ENCODE measurements at regions of chr12 and their contacts with region 1.

Region 1: DNA sequence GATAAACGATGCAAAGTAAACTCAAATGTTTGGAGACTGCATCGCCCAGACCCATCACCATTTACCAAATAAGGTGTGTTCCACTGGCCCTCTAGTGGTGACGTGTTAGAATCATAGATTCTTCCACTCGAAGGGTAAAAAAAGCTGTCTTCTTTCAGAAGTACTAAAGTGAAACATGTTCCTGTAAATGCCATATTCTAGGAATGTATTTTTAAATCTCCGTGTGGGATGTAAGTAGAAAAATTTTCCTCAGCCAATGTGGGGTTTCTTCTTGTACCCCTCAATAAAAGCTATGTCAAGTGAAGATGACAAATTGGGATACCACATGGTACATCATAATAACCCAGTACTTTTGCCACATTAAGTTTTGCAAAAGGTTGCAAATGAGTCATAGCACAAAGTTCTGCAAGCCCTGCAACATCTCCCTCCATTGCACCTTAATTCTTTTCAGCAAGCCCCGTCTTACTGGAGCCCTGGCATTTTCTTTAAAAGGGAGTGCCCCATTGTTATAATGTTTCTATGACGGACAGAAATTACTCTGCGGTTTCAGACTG is 100.8 kb downstream of the CCER1 start:
- DNase-seq: peak in 3 of 10 donors; percentile 9 to 58 (median 31)
- H3K4me3 ChIP-seq: peak overlapping the region in 3 of 59 donors; percentile 2 to 7 (median 5)
- H3K27ac ChIP-seq: peak overlapping the region in 31 of 59 donors; percentile 2 to 80 (median 64)
- H3K27me3 ChIP-seq: no peaks in the 10 kb centered on the region
- CTCF ChIP-seq: peak; percentile 63 to 86 (median 74)

Region 2: GRCh38 chr12:89556976-89557375 is 1297.2 kb before region 1 on chr12:
- intact Hi-C with region 1: loop called in 1 of 2 experiments (anchors 10 kb)
- DNase-seq: no peak
- H3K4me3 ChIP-seq: peak overlapping the region in 4 of 59 donors; percentile 9 to 39 (median 18)
- H3K27ac ChIP-seq: no peak overlapping the region
- H3K27me3 ChIP-seq: no peaks in the 10 kb centered on the region
- CTCF ChIP-seq: no peak

Measured in dorsolateral prefrontal cortex (tissue), 120 donors.